Left ventricle myocardium inferior (tissue), 1 donor: ENCODE measurements at regions of chr1 and their contacts with region 1.

Region 1: GRCh38 chr1:24659993-24660665 is 17.0 kb downstream of the SRRM1 start:
- DNase-seq: no peak
- H3K4me3 ChIP-seq: no peak overlapping the region
- H3K27ac ChIP-seq: no peak overlapping the region
- H3K4me1 ChIP-seq: peaks cover 29% of the 10 kb centered on the region
- H3K27me3 ChIP-seq: no peaks in the 10 kb centered on the region
- CTCF ChIP-seq: no peak

Region 2: DNA sequence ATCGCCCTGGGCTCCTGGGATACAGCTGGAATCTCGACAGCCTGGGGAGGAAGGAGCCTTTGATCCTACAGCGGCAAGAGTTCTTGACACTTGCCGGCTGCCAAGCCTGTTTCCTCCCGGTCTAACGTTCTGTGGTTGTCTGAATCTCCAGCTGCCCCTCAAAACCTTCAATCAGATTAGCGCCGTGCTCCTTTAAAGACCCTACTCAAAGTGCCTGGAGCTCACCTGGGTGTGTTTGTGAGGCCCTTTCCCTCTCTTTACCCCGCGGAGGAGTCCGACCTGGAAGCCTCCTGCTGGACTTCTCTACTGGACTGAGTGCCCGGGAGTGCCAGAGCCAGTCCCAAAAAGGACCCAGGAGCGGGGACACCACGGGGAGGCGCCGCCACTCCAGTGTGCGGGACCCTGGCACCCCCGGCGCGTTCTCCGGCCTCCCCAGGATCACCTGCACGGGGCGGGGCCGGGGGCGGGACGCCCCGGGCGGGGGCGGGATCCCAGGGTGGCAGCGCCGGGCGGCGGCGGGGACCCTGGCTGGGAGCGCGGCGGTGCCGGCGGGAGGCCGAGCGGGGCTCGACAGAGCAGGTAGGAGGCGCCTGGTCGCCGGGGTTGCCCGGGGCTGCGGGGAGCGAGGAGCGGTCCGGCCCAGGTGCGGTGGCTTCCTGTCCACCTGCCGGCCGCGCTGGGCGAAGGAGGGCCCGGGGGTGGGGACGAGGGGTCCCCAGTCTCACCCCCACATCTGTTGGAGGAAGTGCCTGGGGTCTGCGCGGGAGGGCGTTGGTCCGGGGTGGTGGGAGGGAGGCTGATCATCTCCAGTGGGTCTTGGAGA is 104.3 kb before region 1 on chr1 and contains the start of gene NCMAP:
- intact Hi-C with region 1: no loop called
- DNase-seq: peak; percentile 24
- H3K4me3 ChIP-seq: peak within 1 kb of the TSS; percentile 58
- H3K27ac ChIP-seq: no peak within 1 kb of the TSS
- H3K4me1 ChIP-seq: peaks cover 21% of the 10 kb centered on the region
- H3K27me3 ChIP-seq: peaks cover 50% of the 10 kb centered on the region
- CTCF ChIP-seq: peak; percentile 40
- total RNA-seq, gene NCMAP: 0.11 TPM

Region 3: DNA sequence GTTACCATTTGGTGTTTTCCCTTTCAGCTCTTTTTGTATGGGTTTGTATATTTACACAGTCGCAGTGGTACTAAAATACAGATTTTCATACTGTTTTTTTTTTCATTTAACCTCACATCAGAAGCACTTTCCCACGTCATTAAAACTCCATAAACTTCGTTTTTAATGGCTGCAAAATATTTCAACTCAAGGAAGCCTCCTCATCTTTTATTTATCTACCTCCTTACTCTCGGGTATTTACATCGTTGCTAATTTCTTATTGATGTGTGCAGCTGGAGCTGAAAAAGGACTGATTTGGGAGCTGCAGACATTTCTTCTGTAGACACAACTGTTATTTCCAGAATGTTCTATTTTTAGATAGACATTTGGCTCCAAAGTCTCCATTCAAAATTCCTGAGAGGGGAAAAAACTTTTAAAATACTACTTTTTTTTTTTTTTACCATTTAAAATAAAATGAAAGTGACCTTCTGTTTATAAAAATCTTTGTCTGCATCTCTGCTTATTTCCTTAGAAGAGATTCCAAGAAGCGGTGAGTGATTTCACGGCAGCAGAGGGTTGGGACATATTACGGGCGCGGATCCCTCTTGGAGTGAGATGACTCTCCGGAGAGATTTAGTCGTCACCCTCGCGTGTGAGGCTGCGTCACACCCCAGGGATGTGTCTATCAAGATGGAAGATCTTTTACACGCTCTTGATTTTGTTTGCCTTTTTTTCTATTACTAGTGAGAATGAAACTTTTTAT is 259.8 kb after region 1 on chr1:
- intact Hi-C with region 1: no loop called
- DNase-seq: no peak
- H3K4me3 ChIP-seq: no peak overlapping the region
- H3K27ac ChIP-seq: no peak overlapping the region
- H3K4me1 ChIP-seq: no peaks in the 10 kb centered on the region
- H3K27me3 ChIP-seq: peaks cover 64% of the 10 kb centered on the region
- CTCF ChIP-seq: no peak

Region 4: GRCh38 chr1:25223471-25223870 is 563.3 kb after region 1 on chr1:
- intact Hi-C with region 1: loop called (anchors 10 kb)
- DNase-seq: no peak
- H3K4me3 ChIP-seq: no peak overlapping the region
- H3K27ac ChIP-seq: no peak overlapping the region
- H3K4me1 ChIP-seq: peaks cover 6% of the 10 kb centered on the region
- H3K27me3 ChIP-seq: no peaks in the 10 kb centered on the region
- CTCF ChIP-seq: no peak